Panc1 (cell line): ENCODE measurements at regions of chr2 and their contacts with region 1.

Region 1: DNA sequence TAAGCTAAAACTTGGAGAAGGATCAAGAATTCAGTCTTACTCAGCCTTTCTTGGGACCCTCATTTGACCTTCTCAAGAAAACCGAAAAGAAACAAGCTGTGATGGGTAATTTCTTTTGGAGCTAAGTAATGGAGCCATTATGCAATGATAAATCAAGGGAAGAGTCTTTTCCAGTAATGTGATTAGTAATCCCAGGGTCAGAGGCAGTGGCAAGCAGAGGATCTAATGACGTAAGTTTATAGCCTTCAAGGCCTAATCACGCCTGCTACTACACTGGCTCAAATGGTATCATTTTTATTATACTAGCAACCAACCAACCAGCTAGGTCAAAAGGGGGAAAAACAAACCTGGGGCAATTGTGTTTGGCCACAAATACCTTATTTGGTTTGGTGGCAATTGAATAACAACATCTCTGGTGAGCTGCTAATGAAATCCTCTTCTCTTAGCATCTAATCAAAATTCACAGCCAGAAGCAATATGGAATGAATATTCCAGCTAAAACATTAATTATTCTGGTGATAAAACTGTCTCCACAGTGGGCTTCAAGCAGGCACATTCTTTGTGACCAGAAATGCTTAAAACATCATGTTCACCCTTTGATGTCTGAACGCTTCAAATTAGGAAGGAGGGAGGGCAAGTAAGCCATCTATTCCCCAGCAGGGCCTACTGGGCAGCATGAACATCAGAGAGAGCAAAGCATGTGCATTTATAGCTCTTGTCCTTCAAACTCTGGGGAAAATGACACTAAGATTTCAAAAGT is 114.9 kb upstream of the SULT1C3 start:
- DNase-seq: no peak
- ATAC-seq: no peak
- H3K4me3 ChIP-seq: no peak overlapping the region
- H3K27ac ChIP-seq: no peak overlapping the region
- H3K4me1 ChIP-seq: no peaks in the 10 kb centered on the region
- H3K27me3 ChIP-seq: no peaks in the 10 kb centered on the region
- CTCF ChIP-seq: no peak

Region 2: GRCh38 chr2:108069515-108070310 is 55.2 kb before region 1 on chr2:
- CTCF ChIA-PET with region 1: no interaction called
- POLR2A ChIA-PET with region 1: no interaction called
- in situ Hi-C with region 1: no loop called
- intact Hi-C with region 1: loop called (anchors 10 kb)
- DNase-seq: no peak
- ATAC-seq: no peak
- H3K4me3 ChIP-seq: no peak overlapping the region
- H3K27ac ChIP-seq: no peak overlapping the region
- H3K4me1 ChIP-seq: no peaks in the 10 kb centered on the region
- H3K27me3 ChIP-seq: no peaks in the 10 kb centered on the region
- CTCF ChIP-seq: peak; percentile 21; the same call in 1 of the 2 replicates